ENCODE measurements at regions of chr9 and their contacts with region 1.

Region 1: GRCh38 chr9:27539479-27540441 is 10.1 kb upstream of the MOB3B start:
- DNase-seq: no peak
- ATAC-seq: no peak
- H3K4me3 ChIP-seq: no peak overlapping the region
- H3K4me3 Mint-ChIP-seq: no peak overlapping the region
- H3K27ac ChIP-seq: no peak overlapping the region
- H3K27ac Mint-ChIP-seq: no peak overlapping the region
- H3K4me1 ChIP-seq: no peaks in the 10 kb centered on the region
- H3K4me1 Mint-ChIP-seq: no peaks in the 10 kb centered on the region
- H3K27me3 ChIP-seq: no peaks in the 10 kb centered on the region
- H3K27me3 Mint-ChIP-seq: no peaks in the 10 kb centered on the region
- CTCF ChIP-seq: no peak

Region 2: DNA sequence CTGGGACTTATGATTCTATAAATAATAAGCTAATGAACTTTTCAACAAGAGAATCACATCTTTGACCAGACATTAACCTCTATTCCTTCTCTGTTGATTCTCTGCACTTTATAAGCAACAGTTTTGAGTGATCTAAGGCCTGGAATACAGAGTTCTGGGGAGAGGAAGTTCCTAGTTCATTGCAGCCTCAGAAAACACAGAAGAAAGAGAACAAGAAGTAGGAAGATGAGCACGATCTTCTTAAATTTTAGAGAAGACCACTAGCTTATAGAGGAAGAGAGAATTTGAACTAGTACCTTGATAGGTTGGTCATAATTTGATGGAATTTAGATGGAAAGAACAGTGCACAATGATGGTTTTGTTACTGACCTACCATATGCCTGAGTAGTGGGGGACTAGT is 42.1 kb after region 1 on chr9:
- CTCF ChIA-PET with region 1: no interaction called
- POLR2A ChIA-PET with region 1: no interaction called
- intact Hi-C with region 1: loop called in 1 of 2 experiments (anchors 5 kb)
- DNase-seq: no peak
- ATAC-seq: no peak
- H3K4me3 ChIP-seq: no peak overlapping the region
- H3K4me3 Mint-ChIP-seq: no peak overlapping the region
- H3K27ac ChIP-seq: no peak overlapping the region
- H3K27ac Mint-ChIP-seq: no peak overlapping the region
- H3K4me1 ChIP-seq: no peaks in the 10 kb centered on the region
- H3K4me1 Mint-ChIP-seq: no peaks in the 10 kb centered on the region
- H3K27me3 ChIP-seq: peaks cover 0 to 10% of the 10 kb centered on the region in 2 experiments
- H3K27me3 Mint-ChIP-seq: peaks cover 30% of the 10 kb centered on the region
- CTCF ChIP-seq: no peak